ENCODE measurements at regions of chr10 and their contacts with region 1.

Region 1: GRCh38 chr10:67697724-67698131 is 1.7 kb upstream of the CTNNA3 start:
- DNase-seq: peak; percentile 62
- CTCF ChIP-seq: peak; percentile 50

Region 2: DNA sequence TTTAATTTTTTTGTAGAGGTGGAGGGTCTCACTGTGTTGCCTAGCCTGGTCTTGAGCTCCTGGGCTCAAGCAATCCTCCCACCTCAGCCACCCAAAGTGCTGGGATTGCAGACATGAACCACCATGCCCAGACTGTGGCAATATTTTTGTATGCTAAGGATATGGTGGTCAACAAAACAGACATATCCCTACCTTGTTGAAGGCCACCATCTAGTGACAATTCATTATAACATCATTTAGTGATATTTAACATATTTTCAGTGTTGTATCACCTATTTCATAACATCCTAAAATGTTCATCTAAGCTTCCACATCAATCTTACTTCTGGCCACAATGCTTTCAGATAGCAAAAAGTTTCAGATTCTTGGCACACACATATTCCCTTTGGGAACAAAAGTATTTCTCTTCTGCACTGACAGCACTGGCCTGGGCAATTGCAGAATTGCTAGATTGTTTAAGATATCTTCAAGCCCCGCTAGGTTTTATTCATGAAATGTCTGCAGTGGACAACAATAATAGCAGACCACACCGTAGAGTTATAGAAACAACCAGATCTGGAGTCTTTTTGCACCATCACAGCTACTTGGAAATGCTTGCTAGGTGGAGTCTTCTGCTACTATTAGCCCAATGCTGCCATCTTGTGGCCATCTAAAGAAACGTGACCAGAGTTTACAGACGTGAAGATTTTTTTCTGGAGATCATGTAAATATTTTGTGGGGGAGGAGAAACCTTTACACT is 81.9 kb after region 1 on chr10:
- in situ Hi-C with region 1: loop called (anchors 5 kb)
- DNase-seq: peak; percentile 54
- CTCF ChIP-seq: peak; percentile 66

Measured in GM13976 (cell line).